CD14-positive monocyte (primary cell): ENCODE measurements at regions of chr16 and their contacts with region 1.

Region 1: DNA sequence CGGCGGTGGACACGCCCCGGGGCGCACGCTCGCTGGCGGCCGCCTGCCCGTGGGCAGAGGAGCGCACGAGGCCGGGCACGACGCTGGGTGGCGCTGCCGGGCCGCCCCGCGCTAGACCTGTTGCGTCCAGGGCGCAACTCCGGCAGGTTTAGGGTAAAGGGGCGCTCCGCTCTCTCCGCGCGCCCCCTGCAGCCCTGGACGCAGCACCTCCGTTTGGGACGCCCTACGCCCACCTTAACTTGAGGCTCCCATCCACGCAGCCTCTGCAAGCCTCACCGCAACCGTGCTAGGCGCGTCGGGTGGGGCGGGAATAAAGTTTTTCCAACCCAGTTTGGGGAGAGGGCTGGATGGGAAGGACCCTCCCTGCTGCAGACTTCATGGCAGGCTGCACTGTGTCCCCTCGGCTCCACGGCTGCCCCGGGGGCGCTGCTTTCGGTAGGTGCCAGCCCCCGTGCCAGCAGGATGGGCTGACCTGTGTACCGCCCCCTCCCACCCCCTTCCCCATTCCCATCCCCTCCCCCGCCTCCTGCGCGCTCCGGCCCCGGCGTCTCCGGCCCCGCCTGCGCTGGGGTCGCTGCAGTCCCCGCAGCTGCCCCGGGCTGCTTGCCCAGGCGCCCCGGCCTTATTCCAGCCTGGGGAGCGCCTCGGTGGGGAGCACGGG is at the start of gene SYT17:
- DNase-seq: peak; percentile 71 to 79 (median 76)
- H3K4me3 ChIP-seq: peak within 1 kb of the TSS; percentile 30 to 76 (median 46)
- H3K4me3 Mint-ChIP-seq: peak within 1 kb of the TSS; percentile 77 to 86
- H3K27ac ChIP-seq: no peak within 1 kb of the TSS
- H3K27ac Mint-ChIP-seq: no peak within 1 kb of the TSS
- H3K4me1 ChIP-seq: peaks cover 20 to 30% of the 10 kb centered on the region in 2 donors
- H3K4me1 Mint-ChIP-seq: peaks cover 19% of the 10 kb centered on the region
- H3K27me3 ChIP-seq: peaks cover 18 to 38% of the 10 kb centered on the region in 2 donors
- H3K27me3 Mint-ChIP-seq: peaks cover 36 to 50% (median 48%) of the 10 kb centered on the region in 3 donors
- CTCF ChIP-seq: peak; percentile 92
- polyA plus RNA-seq, gene SYT17: 0.81 to 4.9 (median 1.1) TPM

Region 2: GRCh38 chr16:19113453-19114351 is 54.1 kb before region 1 on chr16 and contains the start of gene ITPRIPL2:
- intact Hi-C with region 1: no loop called
- DNase-seq: peak in 2 of 3 donors; percentile 52 to 55
- H3K4me3 ChIP-seq: peak within 1 kb of the TSS; percentile 55 to 81 (median 61)
- H3K4me3 Mint-ChIP-seq: peak within 1 kb of the TSS; percentile 79 to 93
- H3K27ac ChIP-seq: peak within 1 kb of the TSS; percentile 69 to 86
- H3K27ac Mint-ChIP-seq: peak within 1 kb of the TSS; percentile 82 to 95 (median 89)
- H3K4me1 ChIP-seq: peaks cover 57 to 58% of the 10 kb centered on the region in 2 donors
- H3K4me1 Mint-ChIP-seq: peaks cover 55% of the 10 kb centered on the region
- H3K27me3 ChIP-seq: no peaks in the 10 kb centered on the region
- H3K27me3 Mint-ChIP-seq: peaks cover 0 to 4% (median 2%) of the 10 kb centered on the region in 3 donors
- CTCF ChIP-seq: no peak
- polyA plus RNA-seq, gene ITPRIPL2: 7.9 to 9.0 (median 8.2) TPM

Region 3: GRCh38 chr16:19184823-19185509 is 17.1 kb after region 1 on chr16:
- intact Hi-C with region 1: no loop called
- DNase-seq: no peak
- H3K4me3 ChIP-seq: peak overlapping the region in 1 of 3 experiments; percentile 52
- H3K4me3 Mint-ChIP-seq: no peak overlapping the region
- H3K27ac ChIP-seq: peak overlapping the region; percentile 95 to 98
- H3K27ac Mint-ChIP-seq: peak overlapping the region; percentile 88 to 99 (median 92)
- H3K4me1 ChIP-seq: peaks cover 48 to 53% of the 10 kb centered on the region in 2 donors
- H3K4me1 Mint-ChIP-seq: peaks cover 50% of the 10 kb centered on the region
- H3K27me3 ChIP-seq: no peaks in the 10 kb centered on the region
- H3K27me3 Mint-ChIP-seq: peaks cover 0 to 2% (median 2%) of the 10 kb centered on the region in 3 donors
- CTCF ChIP-seq: no peak

Region 4: DNA sequence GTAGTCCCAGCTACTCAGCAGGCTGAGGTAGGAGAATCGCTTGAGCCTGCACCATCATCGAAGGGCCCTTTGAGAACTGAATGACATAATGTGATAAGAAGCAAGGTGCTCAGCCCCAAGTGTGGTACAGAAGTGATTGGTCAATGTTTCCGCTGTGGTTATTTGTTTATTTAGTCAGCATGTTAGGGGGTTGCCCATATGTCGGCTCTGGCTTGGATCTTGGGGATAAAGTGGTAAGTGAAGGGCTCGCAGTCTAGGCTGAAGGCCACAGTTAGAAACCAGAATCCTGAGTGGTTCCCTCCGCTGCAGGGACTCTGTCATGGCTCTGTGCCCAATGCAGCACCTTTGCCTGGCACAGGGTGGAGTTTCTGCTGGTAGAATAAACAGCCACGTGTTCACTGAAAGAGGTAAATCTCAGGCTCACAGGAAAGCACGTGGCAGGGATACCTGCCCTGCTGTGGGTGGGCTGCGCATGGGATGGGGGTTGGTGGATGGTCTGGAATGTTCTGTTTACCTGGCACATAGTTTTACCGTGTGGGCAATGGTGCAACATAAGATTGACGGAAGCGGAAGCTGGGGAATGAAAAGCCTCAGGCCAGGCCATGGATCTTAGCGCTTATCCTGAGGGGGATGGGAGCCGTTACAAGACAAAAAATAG is 35.7 kb after region 1 on chr16:
- intact Hi-C with region 1: no loop called
- DNase-seq: no peak
- H3K4me3 ChIP-seq: no peak overlapping the region
- H3K4me3 Mint-ChIP-seq: no peak overlapping the region
- H3K27ac ChIP-seq: no peak overlapping the region
- H3K27ac Mint-ChIP-seq: peak overlapping the region in 3 of 7 donors; percentile 5 to 20 (median 13)
- H3K4me1 ChIP-seq: peaks cover 6 to 8% of the 10 kb centered on the region in 2 donors
- H3K4me1 Mint-ChIP-seq: peaks cover 22% of the 10 kb centered on the region
- H3K27me3 ChIP-seq: no peaks in the 10 kb centered on the region
- H3K27me3 Mint-ChIP-seq: peaks cover 7 to 11% (median 7%) of the 10 kb centered on the region in 3 donors
- CTCF ChIP-seq: no peak

Region 5: GRCh38 chr16:19375561-19376158 is 207.8 kb after region 1 on chr16:
- intact Hi-C with region 1: loop called (anchors 1 to 5 kb)
- DNase-seq: peak; percentile 32 to 55 (median 52)
- H3K4me3 ChIP-seq: no peak overlapping the region
- H3K4me3 Mint-ChIP-seq: no peak overlapping the region
- H3K27ac ChIP-seq: no peak overlapping the region
- H3K27ac Mint-ChIP-seq: no peak overlapping the region
- H3K4me1 ChIP-seq: no peaks in the 10 kb centered on the region
- H3K4me1 Mint-ChIP-seq: no peaks in the 10 kb centered on the region
- H3K27me3 ChIP-seq: no peaks in the 10 kb centered on the region
- H3K27me3 Mint-ChIP-seq: peaks cover 0 to 8% (median 6%) of the 10 kb centered on the region in 3 donors
- CTCF ChIP-seq: peak; percentile 95